Activated T-helper 2 cell treated with anti-CD3 and anti-CD28 coated beads, Interferon-gamma antibody, Interleukin-2, Interleukin-4, amounts not matched to agents 10 μg/mL and 5 μg/mL and 100 μg/mL, durations not matched to agents 14 hours and 24 hours and 36 hours (primary cell): ENCODE measurements at regions of chr5 and their contacts with region 1.

Region 1: GRCh38 chr5:154445422-154446182 is at the start of gene SAP30L:
- DNase-seq: peak; percentile 96
- H3K4me3 Mint-ChIP-seq: peak within 1 kb of the TSS; percentile 98
- H3K27ac Mint-ChIP-seq: peak within 1 kb of the TSS; percentile 94
- H3K4me1 Mint-ChIP-seq: peaks cover 31% of the 10 kb centered on the region
- H3K27me3 Mint-ChIP-seq: no peaks in the 10 kb centered on the region
- total RNA-seq, gene SAP30L: 35.9 and 36.0 TPM in 2 replicates

Region 2: DNA sequence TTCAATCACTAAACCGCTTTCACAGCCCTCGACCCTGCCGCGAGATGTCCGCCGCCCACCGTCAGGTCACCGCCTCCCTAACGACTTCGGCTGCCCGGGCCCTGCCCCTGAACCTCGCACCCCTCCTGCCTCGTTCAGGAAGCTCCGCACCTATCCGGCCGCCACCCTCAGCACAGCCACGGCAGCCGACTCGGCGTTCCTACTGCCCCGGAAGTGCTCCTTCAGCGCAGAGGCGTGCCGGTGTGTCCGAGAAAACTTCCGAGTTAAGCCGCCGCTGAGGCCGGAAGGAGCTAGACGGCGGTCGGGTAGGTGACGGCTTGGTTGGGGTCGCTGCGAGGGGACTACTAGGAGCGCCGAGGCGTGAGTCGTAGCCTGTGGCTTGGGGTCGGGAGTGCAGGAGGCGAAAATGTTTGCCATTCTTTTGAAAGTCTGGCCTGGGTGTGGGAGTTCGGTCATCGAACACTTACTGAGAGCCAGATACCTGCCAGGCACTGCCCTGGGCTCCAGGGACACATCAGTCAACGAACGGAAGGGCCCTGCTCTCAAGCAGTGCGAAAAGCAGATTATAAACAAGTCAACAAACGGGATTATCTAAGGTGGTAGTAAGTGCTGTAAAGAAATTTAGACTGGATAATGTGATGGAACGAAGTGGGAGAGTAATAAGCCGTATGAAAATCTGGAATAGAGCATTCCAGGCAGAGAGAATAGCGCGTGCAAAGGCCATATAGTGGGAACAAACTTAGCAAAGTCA is 406.7 kb before region 1 on chr5 and contains the starts of genes FAM114A2 and MFAP3:
- intact Hi-C with region 1: loop called (anchors 1 kb)
- DNase-seq: peak; percentile 87
- H3K4me3 Mint-ChIP-seq: peak within 1 kb of the TSS; percentile 98
- H3K27ac Mint-ChIP-seq: peak within 1 kb of the TSS; percentile 94
- H3K4me1 Mint-ChIP-seq: peaks cover 37% of the 10 kb centered on the region
- H3K27me3 Mint-ChIP-seq: no peaks in the 10 kb centered on the region
- total RNA-seq, gene FAM114A2: 23.6 and 31.2 TPM in 2 replicates
- total RNA-seq, gene MFAP3: 17.1 and 21.8 TPM in 2 replicates

Region 3: DNA sequence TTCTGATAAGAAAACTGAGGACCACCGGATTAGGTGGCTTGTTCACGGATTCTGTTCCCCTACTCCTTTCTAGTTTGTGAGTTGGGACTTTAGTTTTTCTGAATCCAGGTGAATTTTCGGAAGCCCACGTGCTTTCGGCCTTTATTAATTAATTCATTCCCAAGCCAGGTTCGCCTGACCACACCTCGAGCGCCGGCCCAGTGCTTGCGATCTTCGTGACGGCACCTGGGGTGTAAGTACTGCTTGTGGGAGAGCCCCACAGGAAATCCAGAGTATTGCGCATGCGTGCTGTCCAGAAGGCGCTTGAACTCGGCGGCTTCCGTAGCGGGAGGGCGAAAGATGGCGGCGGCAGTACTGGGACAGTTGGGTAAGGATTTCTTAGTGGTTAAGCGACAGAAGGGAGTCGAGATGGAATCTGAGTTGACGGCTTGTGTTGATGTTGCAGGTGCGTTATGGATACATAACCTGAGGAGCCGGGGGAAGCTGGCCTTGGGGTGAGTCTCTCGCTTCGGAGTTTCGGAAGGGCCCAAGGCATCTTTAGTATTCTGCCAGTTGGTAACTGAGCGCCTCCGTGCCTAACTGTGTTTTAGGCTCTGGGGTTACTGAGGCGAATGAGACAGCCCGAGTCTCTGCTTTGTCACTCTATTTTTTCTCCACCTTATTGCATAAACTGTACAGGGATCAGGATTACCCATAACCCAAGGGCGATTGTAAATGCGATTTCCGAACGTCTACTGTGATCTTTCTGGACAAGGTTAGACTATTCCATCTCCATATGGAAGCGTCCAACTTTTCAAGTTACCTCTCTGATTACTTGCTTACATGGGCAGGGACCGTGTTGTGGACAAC is 495.4 kb after region 1 on chr5 and contains the start of gene MRPL22:
- intact Hi-C with region 1: loop called (anchors 10 kb)
- DNase-seq: peak; percentile 93
- H3K4me3 Mint-ChIP-seq: peak within 1 kb of the TSS; percentile 98
- H3K27ac Mint-ChIP-seq: peak within 1 kb of the TSS; percentile 95
- H3K4me1 Mint-ChIP-seq: peaks cover 32% of the 10 kb centered on the region
- H3K27me3 Mint-ChIP-seq: no peaks in the 10 kb centered on the region
- total RNA-seq, gene MRPL22: 79.2 and 81.9 TPM in 2 replicates